Vagina (tissue), 2 donors: ENCODE measurements at regions of chr6 and their contacts with region 1.

Region 1: GRCh38 chr6:29016559-29017427 is 11.7 kb upstream of the ZNF311 start:
- DNase-seq: no peak
- H3K4me3 ChIP-seq: peak overlapping the region; percentile 50 to 63
- H3K27ac ChIP-seq: peak overlapping the region; percentile 57
- H3K4me1 ChIP-seq: peaks cover 9% of the 10 kb centered on the region
- H3K27me3 ChIP-seq: no peaks in the 10 kb centered on the region
- CTCF ChIP-seq: peak; percentile 72 to 89 (median 86)
- POLR2A ChIP-seq: no peak

Region 2: DNA sequence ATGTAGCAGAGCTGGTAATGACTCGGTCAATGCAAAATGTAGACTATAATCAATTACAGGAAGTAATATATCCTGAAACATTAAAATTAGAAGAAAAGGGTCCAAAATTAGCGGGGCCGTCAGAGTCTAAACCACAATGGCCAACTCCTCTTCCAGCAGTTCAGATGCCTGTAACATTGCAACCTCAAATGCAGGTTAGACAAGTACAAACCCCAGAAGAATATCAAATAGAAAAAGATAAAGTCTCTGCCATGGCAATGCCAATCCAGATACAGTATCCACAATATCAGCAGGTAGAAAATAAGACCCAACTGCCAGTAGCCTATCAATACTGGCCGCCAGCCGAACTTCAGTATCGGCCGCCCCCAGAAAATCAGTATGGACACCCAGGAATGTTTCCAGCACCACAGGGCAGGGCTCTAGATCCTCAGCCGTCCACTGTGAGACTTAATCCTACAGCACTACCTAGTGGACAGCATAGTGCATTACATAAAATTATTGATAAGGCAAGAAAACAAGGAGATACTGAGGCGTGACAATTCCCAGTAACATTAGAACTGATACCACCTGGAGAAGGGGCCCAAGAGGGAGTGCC is 332.8 kb before region 1 on chr6:
- intact Hi-C with region 1: loop called (anchors 5 kb)
- DNase-seq: no peak
- H3K4me3 ChIP-seq: no peak overlapping the region
- H3K27ac ChIP-seq: no peak overlapping the region
- H3K4me1 ChIP-seq: no peaks in the 10 kb centered on the region
- H3K27me3 ChIP-seq: no peaks in the 10 kb centered on the region
- CTCF ChIP-seq: peak in 1 of 3 experiments; percentile 29
- POLR2A ChIP-seq: no peak

Region 3: DNA sequence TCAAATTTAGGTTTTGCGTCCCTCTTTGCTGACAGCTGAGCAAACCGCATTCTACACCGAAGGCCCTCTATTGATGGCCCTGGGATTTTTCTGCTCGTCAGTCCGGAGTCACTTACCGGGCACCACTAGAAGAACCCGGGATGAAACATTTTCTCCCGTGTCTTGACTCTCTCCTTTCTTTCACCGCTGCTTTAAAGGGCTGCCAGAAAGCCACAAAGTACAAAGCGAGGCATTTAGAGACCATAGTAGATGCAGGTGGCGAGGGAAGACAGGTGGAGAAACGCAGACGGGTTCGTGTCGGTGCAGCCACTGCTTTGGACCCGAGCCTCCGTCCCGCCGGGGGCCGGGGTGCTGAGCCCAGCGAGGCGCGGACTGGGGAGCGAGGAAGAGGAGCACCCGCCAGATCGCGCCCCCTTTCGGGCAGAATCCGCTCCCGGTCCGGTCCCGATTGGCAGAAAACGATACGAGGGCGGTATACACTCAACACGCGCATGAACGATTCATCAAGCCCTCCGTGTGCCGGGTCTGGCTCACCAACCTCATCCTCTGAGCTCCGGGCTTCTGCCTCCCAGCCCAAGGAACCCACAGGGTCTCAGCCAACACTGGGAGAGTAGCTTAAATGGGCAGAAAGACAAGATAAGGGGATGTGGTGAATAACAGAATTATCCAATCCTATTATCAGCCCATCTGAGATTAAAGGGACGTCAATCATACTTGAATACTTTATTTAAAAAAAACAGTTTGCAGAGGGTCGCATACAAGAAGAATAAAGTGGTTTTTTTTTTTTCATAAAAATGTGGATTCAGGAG is 178.0 kb before region 1 on chr6:
- intact Hi-C with region 1: loop called (anchors 5 kb)
- DNase-seq: peak in 1 of 2 donors; percentile 88
- H3K4me3 ChIP-seq: peak overlapping the region; percentile 44 to 61
- H3K27ac ChIP-seq: peak overlapping the region; percentile 73
- H3K4me1 ChIP-seq: peaks cover 16% of the 10 kb centered on the region
- H3K27me3 ChIP-seq: no peaks in the 10 kb centered on the region
- CTCF ChIP-seq: peak in 2 of 3 experiments; percentile 16 to 49
- POLR2A ChIP-seq: no peak